T-cell (primary cell): ENCODE measurements at regions of chr4 and their contacts with region 1.

Region 1: DNA sequence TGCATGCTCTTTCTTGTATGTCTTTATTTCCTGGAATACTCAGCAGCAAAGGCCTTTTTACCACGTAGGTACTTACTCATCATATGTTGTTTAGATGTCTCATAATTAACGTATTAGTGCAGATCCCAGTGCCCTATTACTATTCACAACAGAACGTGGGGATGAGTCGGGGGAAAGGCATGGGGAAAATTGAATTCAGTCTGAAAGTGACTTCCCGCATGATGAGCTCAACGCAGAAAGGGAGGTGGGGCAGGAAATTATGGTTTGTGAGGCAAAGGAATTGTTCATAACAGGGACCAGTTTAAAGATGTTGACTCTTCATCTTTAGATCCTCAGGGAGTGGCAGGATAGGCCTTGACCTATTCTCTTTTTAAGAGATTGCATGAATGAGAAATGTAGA is 2.0 kb upstream of the TMPRSS11D start:
- DNase-seq: no peak
- ATAC-seq: no peak
- H3K4me3 ChIP-seq: no peak overlapping the region
- H3K4me3 Mint-ChIP-seq: no peak overlapping the region
- H3K27ac ChIP-seq: no peak overlapping the region
- H3K27ac Mint-ChIP-seq: no peak overlapping the region
- H3K4me1 ChIP-seq: no peaks in the 10 kb centered on the region
- H3K4me1 Mint-ChIP-seq: no peaks in the 10 kb centered on the region
- H3K27me3 ChIP-seq: no peaks in the 10 kb centered on the region
- H3K27me3 Mint-ChIP-seq: peaks cover 2 to 4% of the 10 kb centered on the region in 2 donors

Region 2: GRCh38 chr4:67796810-67797209 is 89.0 kb before region 1 on chr4:
- CTCF ChIA-PET with region 1: no interaction called
- POLR2A ChIA-PET with region 1: no interaction called
- DNase-seq: no peak
- ATAC-seq: no peak
- H3K4me3 ChIP-seq: no peak overlapping the region
- H3K4me3 Mint-ChIP-seq: no peak overlapping the region
- H3K27ac ChIP-seq: no peak overlapping the region
- H3K27ac Mint-ChIP-seq: no peak overlapping the region
- H3K4me1 ChIP-seq: no peaks in the 10 kb centered on the region
- H3K4me1 Mint-ChIP-seq: no peaks in the 10 kb centered on the region
- H3K27me3 ChIP-seq: no peaks in the 10 kb centered on the region
- H3K27me3 Mint-ChIP-seq: no peaks in the 10 kb centered on the region

Region 3: DNA sequence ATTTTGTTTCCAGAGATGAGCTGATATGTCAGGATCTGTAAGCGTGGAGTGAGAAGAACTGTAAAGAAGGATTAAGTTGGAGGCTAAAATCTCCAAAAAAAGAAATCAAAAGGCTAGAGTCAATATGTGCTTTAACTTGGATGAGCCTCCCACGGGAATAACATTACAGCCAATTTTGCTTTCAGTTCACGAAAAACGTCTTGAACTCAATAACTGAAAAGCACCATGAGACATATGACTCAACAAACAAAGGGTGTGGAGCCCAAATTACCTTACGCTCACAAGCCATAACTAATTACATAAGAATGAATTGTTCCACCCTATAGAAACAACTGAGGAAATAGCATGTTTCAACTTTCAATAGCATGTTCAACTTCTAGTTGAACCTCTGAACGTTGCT is 24.2 kb before region 1 on chr4:
- CTCF ChIA-PET with region 1: interaction called in 1 of 2 experiments, 3 read pairs
- POLR2A ChIA-PET with region 1: interaction called in 1 of 2 experiments, 10 read pairs
- DNase-seq: no peak
- ATAC-seq: no peak
- H3K4me3 ChIP-seq: no peak overlapping the region
- H3K4me3 Mint-ChIP-seq: no peak overlapping the region
- H3K27ac ChIP-seq: no peak overlapping the region
- H3K27ac Mint-ChIP-seq: no peak overlapping the region
- H3K4me1 ChIP-seq: no peaks in the 10 kb centered on the region
- H3K4me1 Mint-ChIP-seq: no peaks in the 10 kb centered on the region
- H3K27me3 ChIP-seq: no peaks in the 10 kb centered on the region
- H3K27me3 Mint-ChIP-seq: peaks cover 4 to 14% of the 10 kb centered on the region in 2 donors

Region 4: DNA sequence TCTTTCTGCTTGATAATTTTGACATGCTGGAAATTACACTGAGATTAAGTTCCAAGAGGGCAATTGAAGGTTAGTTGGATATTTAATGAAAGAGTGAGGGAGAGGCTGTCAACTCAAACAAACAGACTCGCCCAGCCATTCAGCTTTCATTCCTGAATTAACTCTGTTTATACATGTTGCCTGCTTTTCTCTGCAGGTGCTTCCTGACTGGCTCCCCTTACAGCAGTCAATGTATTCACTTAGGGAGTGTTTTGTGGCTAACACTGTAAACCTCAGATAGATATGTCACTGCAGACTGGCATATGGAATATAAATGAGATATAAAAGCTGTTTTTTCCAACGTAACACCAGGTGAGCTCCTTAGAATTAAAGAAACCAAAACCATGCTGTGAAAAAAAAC is 48.9 kb after region 1 on chr4:
- CTCF ChIA-PET with region 1: no interaction called
- POLR2A ChIA-PET with region 1: no interaction called
- DNase-seq: no peak
- ATAC-seq: no peak
- H3K4me3 ChIP-seq: no peak overlapping the region
- H3K4me3 Mint-ChIP-seq: no peak overlapping the region
- H3K27ac ChIP-seq: no peak overlapping the region
- H3K27ac Mint-ChIP-seq: no peak overlapping the region
- H3K4me1 ChIP-seq: no peaks in the 10 kb centered on the region
- H3K4me1 Mint-ChIP-seq: no peaks in the 10 kb centered on the region
- H3K27me3 ChIP-seq: no peaks in the 10 kb centered on the region
- H3K27me3 Mint-ChIP-seq: peaks cover 0 to 4% of the 10 kb centered on the region in 2 donors